PC-9 (cell line): ENCODE measurements at regions of chr11 and their contacts with region 1.

Region 1: GRCh38 chr11:117946842-117947526 is 17.8 kb upstream of the TMPRSS13 start:
- DNase-seq: peak; percentile 84 to 90
- H3K4me3 ChIP-seq: no peak overlapping the region
- H3K27ac ChIP-seq: no peak overlapping the region
- H3K4me1 ChIP-seq: peaks cover 18% of the 10 kb centered on the region
- H3K27me3 ChIP-seq: peaks cover 12% of the 10 kb centered on the region; the same call in 1 of the 2 replicates
- CTCF ChIP-seq: peak; percentile 97

Region 2: GRCh38 chr11:117702965-117703598 is 243.9 kb before region 1 on chr11:
- CTCF ChIA-PET with region 1: no interaction called
- POLR2A ChIA-PET with region 1: interaction called, 26 read pairs
- intact Hi-C with region 1: no loop called
- DNase-seq: no peak
- H3K4me3 ChIP-seq: no peak overlapping the region
- H3K27ac ChIP-seq: no peak overlapping the region
- H3K4me1 ChIP-seq: no peaks in the 10 kb centered on the region
- H3K27me3 ChIP-seq: peaks cover 99% of the 10 kb centered on the region
- CTCF ChIP-seq: no peak

Region 3: GRCh38 chr11:117843666-117844484 is 103.1 kb before region 1 on chr11:
- CTCF ChIA-PET with region 1: interaction called, 19 read pairs
- POLR2A ChIA-PET with region 1: no interaction called
- intact Hi-C with region 1: loop called (anchors 1 kb)
- DNase-seq: peak in 1 of 2 experiments; percentile 68
- H3K4me3 ChIP-seq: no peak overlapping the region
- H3K27ac ChIP-seq: no peak overlapping the region
- H3K4me1 ChIP-seq: no peaks in the 10 kb centered on the region
- H3K27me3 ChIP-seq: peaks cover 6% of the 10 kb centered on the region
- CTCF ChIP-seq: peak; percentile 99

Region 4: GRCh38 chr11:117929195-117929915 is 17.6 kb before region 1 on chr11 and contains the start of gene TMPRSS13:
- CTCF ChIA-PET with region 1: interaction called, 7 read pairs
- POLR2A ChIA-PET with region 1: no interaction called
- intact Hi-C with region 1: loop called (anchors 1 kb)
- DNase-seq: peak; percentile 80 to 94
- H3K4me3 ChIP-seq: peak within 1 kb of the TSS; percentile 88
- H3K27ac ChIP-seq: peak within 1 kb of the TSS; percentile 86
- H3K4me1 ChIP-seq: peaks cover 57% of the 10 kb centered on the region
- H3K27me3 ChIP-seq: no peaks in the 10 kb centered on the region
- CTCF ChIP-seq: peak; percentile 46; the same call in 1 of the 2 replicates
- total RNA-seq, gene TMPRSS13: 18.5 and 21.7 TPM in 2 replicates

Region 5: DNA sequence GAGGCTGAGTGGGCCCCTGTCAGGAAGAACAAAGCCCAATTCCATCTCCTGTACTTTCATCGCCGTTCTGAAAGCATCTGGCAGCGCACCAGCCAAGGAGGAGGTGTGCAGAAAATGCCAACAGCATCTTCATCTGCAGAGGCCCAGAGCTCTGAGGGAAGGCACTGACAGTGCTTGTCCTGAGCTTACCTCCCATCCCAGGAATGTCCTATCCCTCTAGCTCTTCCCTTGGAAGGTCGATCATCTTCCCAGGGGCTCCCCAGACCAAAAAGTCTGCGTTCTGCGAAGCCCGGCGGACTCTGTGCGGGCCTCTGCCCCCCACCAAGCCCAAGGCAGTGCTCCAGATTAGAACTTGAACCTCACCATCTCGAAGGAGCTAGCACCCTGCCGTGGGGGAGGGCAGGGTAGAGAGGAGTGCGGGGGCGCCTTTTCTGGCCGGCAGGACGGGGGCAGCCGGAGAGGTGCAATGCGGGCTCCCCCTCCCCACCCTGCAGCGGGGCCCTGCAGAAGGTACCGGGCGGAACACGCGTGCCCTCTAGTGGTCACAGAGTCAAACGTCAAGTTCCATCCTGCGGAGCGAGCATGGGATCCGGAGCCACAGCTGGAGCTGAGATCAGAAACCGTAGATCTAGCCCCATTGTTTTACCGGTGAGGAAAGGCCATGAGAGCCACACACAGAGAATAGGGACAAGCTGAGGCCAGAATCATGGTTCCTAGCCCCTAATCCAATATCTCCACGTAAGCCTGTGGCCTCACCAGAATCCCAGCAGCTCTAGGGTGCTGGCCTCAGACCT is 224.5 kb after region 1 on chr11:
- CTCF ChIA-PET with region 1: no interaction called
- POLR2A ChIA-PET with region 1: no interaction called
- intact Hi-C with region 1: loop called (anchors 5 kb)
- DNase-seq: peak in 1 of 2 experiments; percentile 53
- H3K4me3 ChIP-seq: no peak overlapping the region
- H3K27ac ChIP-seq: no peak overlapping the region
- H3K4me1 ChIP-seq: peaks cover 24% of the 10 kb centered on the region
- H3K27me3 ChIP-seq: peaks cover 40% of the 10 kb centered on the region
- CTCF ChIP-seq: peak; percentile 98